Ascending aorta (tissue), 2 donors: ENCODE measurements at regions of chr10 and their contacts with region 1.

Region 1: DNA sequence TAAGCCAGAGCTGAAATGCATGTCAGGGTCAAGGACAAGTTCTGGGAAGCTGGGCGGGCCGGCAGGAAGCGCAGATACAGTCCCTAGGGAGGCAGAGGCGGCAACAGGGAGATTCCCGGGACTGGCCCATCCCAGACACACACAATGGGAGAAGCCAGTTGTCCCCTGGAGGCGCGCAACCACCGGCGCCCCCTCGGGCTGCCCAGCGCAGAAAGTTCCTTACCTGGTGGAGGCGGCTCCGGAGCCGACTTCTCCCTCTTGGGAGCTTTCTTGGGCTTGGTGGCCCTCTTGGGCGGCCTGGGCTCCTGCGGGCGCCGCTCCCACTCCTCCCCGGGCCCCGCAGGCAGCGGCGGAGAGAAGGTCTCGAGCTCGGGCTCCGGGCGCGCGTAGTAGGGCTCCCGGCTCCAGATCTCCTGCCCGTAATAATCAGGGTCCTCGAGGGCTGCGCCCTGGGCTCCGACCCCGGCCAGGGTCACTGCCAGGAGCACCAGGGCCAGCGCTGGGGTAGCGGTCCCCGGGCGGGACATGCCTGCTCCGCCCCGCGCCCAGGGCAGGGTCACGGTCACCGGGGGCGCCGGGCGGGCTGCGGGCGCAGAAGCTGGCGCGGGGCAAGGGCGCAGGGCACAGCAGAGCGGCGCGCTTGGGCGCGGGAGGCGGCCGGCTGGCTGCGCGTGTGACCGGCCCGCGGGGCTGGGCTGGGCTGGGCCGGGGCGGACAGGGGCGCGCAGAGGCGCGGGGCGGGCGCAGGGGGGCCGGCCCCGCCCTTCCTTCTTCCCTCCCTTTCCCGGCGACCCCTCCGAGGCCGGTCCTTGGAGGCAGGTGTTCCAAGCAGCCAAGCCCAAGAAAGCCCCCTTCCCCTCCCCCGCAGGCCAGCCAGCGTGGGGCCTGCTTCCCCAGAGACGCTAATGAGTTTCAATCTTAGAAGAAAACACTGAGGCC is at the start of gene CPXM2:
- DNase-seq: peak in 1 of 2 donors; percentile 67
- H3K4me3 ChIP-seq: peak within 1 kb of the TSS; percentile 72 to 93
- H3K27ac ChIP-seq: peak within 1 kb of the TSS; percentile 99
- H3K4me1 ChIP-seq: peaks cover 0 to 27% of the 10 kb centered on the region in 2 donors
- H3K27me3 ChIP-seq: no peaks in the 10 kb centered on the region
- CTCF ChIP-seq: peak in 1 of 3 experiments; percentile 14
- total RNA-seq, gene CPXM2: 125 TPM

Region 2: GRCh38 chr10:123582084-123582989 is 309.1 kb before region 1 on chr10:
- intact Hi-C with region 1: loop called (anchors 2 kb)
- DNase-seq: peak; percentile 39 to 86
- H3K4me3 ChIP-seq: no peak overlapping the region
- H3K27ac ChIP-seq: no peak overlapping the region
- H3K4me1 ChIP-seq: peaks cover 3 to 10% of the 10 kb centered on the region in 2 donors
- H3K27me3 ChIP-seq: no peaks in the 10 kb centered on the region
- CTCF ChIP-seq: peak; percentile 73 to 90 (median 85)

Region 3: GRCh38 chr10:123800289-123800688 is 91.1 kb before region 1 on chr10:
- intact Hi-C with region 1: loop called (anchors 2 kb)
- DNase-seq: peak in 1 of 2 donors; percentile 76
- H3K4me3 ChIP-seq: peak overlapping the region in 1 of 2 donors; percentile 16
- H3K27ac ChIP-seq: peak overlapping the region; percentile 79 to 89
- H3K4me1 ChIP-seq: peaks cover 0 to 21% of the 10 kb centered on the region in 2 donors
- H3K27me3 ChIP-seq: no peaks in the 10 kb centered on the region
- CTCF ChIP-seq: no peak

Region 4: GRCh38 chr10:123868038-123869019 is 23.1 kb before region 1 on chr10:
- intact Hi-C with region 1: loop called (anchors 2 kb)
- DNase-seq: peak in 1 of 2 donors; percentile 63
- H3K4me3 ChIP-seq: no peak overlapping the region
- H3K27ac ChIP-seq: peak overlapping the region; percentile 40 to 65
- H3K4me1 ChIP-seq: peaks cover 31 to 40% of the 10 kb centered on the region in 2 donors
- H3K27me3 ChIP-seq: no peaks in the 10 kb centered on the region
- CTCF ChIP-seq: no peak

Region 5: DNA sequence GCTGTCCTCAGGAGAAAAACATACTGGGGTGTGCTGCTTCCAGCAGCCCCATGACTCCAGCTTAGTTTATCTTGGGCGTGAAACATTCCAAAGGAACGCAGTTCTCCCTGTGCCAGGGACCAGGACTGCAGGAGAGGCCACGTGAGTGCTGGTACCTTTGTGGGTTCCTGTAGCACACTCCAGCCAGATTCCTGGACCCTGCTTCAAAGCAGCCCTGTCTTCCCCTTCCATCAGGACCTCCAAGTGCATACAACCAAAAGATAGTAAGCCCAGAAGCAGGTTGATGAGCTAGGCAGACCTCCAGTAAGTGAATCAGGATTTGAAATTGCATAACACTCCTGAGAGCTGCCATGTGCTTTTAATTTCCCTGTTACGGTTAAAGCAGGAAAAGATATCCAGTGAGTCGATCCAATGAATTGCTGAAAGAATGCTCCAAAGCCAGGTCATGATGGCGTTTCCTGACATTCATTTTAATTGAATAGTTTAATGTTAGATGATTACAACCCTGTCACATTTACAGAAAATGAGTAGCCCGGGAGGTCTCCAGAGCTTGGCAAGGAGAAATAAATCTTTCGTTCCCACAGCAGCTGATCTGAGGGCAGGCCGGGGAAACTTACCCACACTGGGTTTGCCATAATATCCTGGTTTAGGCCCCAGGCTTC is 39.1 kb after region 1 on chr10:
- intact Hi-C with region 1: loop called (anchors 2 kb)
- DNase-seq: peak in 1 of 2 donors; percentile 79
- H3K4me3 ChIP-seq: peak overlapping the region in 1 of 2 donors; percentile 28
- H3K27ac ChIP-seq: peak overlapping the region; percentile 81 to 86
- H3K4me1 ChIP-seq: peaks cover 4 to 13% of the 10 kb centered on the region in 2 donors
- H3K27me3 ChIP-seq: no peaks in the 10 kb centered on the region
- CTCF ChIP-seq: no peak

Region 6: DNA sequence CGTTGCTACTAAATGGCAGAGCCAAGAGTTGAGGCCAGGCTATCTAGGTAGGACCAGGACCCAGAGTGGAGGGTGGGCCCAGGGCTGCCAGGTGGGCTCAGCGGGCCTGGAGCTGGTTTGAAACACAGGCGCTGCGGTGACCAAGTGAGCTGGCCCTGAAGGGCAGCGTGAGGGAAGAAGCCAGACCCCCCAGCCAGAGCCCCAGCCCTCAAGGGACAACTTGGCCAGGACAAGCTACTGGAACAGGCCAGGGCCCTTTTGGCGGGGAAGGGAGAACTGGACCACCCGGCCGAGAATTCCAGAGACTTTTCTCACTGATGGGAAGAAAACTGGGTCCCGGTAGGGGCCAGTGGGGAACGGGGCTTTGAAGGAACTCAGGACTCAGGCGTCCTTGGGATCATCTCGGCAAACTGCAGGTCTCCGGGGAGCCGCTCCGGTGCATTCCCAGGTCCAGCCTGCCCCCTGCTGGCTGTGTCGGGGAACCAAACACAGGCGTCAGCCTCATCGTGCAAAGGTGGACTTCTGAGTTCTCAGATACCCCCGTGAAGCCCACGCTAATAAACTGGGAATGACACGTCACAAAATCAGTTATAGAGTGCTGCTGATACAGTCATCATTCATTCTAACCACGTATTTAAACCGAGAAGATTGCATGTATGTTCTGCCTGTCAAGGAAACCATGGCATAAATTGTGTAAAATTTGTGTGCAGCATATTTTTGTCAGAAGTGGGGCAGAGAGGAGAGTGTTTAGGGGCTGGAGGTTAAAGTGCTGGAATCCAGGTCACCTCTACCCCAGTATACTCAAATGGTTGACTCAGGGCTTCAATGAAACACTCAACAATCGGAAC is 76.2 kb after region 1 on chr10:
- intact Hi-C with region 1: loop called (anchors 2 kb)
- DNase-seq: peak in 1 of 2 donors; percentile 86
- H3K4me3 ChIP-seq: peak overlapping the region in 1 of 2 donors; percentile 37
- H3K27ac ChIP-seq: no peak overlapping the region
- H3K4me1 ChIP-seq: peaks cover under 1 to 4% of the 10 kb centered on the region in 2 donors
- H3K27me3 ChIP-seq: no peaks in the 10 kb centered on the region
- CTCF ChIP-seq: peak; percentile 92 to 95 (median 94)